GM10248 (cell line): ENCODE measurements at regions of chr5 and their contacts with region 1.

Region 1: GRCh38 chr5:37786862-37787519 is 52.9 kb downstream of the GDNF start:
- DNase-seq: no peak
- CTCF ChIP-seq: no peak

Region 2: GRCh38 chr5:37799865-37800421 is 13.0 kb after region 1 on chr5:
- CTCF ChIA-PET with region 1: interaction called, 10 read pairs
- POLR2A ChIA-PET with region 1: no interaction called
- DNase-seq: no peak
- CTCF ChIP-seq: no peak